HepG2 (cell line): ENCODE measurements at regions of chr4 and their contacts with region 1.

Region 1: GRCh38 chr4:124817531-124817930 is 105.0 kb upstream of the ANKRD50 start:
- DNase-seq: no peak
- ATAC-seq: no peak
- H3K4me3 ChIP-seq: no peak overlapping the region
- H3K27ac ChIP-seq: no peak overlapping the region
- H3K4me1 ChIP-seq: no peaks in the 10 kb centered on the region
- H3K27me3 ChIP-seq: no peaks in the 10 kb centered on the region
- CTCF ChIP-seq: no peak
- EP300 ChIP-seq: no peak
- POLR2A ChIP-seq: no peak
- RAD21 ChIP-seq: no peak

Region 2: DNA sequence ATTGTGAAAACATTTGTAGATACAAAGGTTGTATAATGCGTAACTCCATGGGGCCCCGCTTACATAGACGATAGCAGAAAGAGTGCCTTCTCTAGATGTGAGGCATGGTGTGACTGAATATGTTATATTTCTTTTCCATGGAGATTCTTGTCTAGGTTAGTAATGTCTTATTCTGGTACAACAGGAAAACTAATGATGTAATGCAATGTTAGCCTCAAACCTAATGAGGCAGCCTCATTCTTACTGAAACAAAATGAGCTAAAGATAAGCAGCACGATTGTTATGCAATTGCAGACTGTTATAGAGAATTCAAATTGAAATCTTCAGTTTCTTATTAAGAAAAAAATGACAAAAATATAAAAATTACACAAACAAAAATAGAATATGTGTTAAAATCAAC is 66.1 kb after region 1 on chr4:
- CTCF ChIA-PET with region 1: no interaction called
- POLR2A ChIA-PET with region 1: no interaction called
- in situ Hi-C with region 1: no loop called
- intact Hi-C with region 1: no loop called
- DNase-seq: no peak
- ATAC-seq: no peak
- H3K4me3 ChIP-seq: no peak overlapping the region
- H3K27ac ChIP-seq: no peak overlapping the region
- H3K4me1 ChIP-seq: peaks cover 5% of the 10 kb centered on the region; the same call in 1 of the 2 replicates
- H3K27me3 ChIP-seq: no peaks in the 10 kb centered on the region
- CTCF ChIP-seq: no peak
- EP300 ChIP-seq: no peak
- POLR2A ChIP-seq: no peak
- RAD21 ChIP-seq: no peak

Region 3: GRCh38 chr4:126071346-126072333 is 1254.1 kb after region 1 on chr4:
- CTCF ChIA-PET with region 1: no interaction called
- POLR2A ChIA-PET with region 1: no interaction called
- in situ Hi-C with region 1: no loop called
- intact Hi-C with region 1: loop called (anchors 5 kb)
- DNase-seq: peak; percentile 11
- ATAC-seq: no peak; the same call in 2 of the 3 replicates
- H3K4me3 ChIP-seq: no peak overlapping the region
- H3K27ac ChIP-seq: no peak overlapping the region
- H3K4me1 ChIP-seq: no peaks in the 10 kb centered on the region
- H3K27me3 ChIP-seq: no peaks in the 10 kb centered on the region
- CTCF ChIP-seq: no peak
- EP300 ChIP-seq: no peak
- POLR2A ChIP-seq: no peak
- RAD21 ChIP-seq: no peak